A673 (cell line): ENCODE measurements at regions of chr15 and their contacts with region 1.

Region 1: DNA sequence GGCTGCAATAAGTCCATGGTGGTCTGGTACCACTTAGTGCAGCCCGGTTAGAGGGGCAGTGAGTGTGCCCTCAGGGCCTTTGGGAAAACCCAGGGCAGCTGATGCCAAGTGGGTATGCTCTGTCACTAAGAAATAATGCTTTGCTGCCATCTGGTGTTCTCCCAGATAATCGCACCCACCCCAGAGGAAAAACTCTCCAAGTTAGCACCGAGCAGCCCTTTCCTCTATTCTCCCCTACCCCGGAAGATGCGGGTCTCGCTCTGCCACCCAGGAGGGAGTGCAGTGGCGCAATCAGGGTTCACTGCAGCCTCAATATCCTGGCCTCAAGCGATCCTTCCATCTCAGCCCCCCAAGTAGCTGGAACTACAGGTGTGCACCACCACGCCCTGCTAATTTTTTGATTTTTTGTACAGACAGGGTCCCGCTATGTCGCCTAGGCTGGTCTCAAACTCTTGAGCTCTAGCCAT is 21.3 kb upstream of the DAPK2 start:
- DNase-seq: peak; percentile 86
- H3K4me3 ChIP-seq: no peak overlapping the region
- H3K27ac ChIP-seq: no peak overlapping the region
- H3K4me1 ChIP-seq: no peaks in the 10 kb centered on the region
- H3K27me3 ChIP-seq: no peaks in the 10 kb centered on the region
- CTCF ChIP-seq: peak; percentile 76

Region 2: GRCh38 chr15:63402498-63403253 is 664.9 kb before region 1 on chr15:
- CTCF ChIA-PET with region 1: no interaction called
- POLR2A ChIA-PET with region 1: no interaction called
- intact Hi-C with region 1: loop called (anchors 5 kb)
- DNase-seq: peak; percentile 67
- H3K4me3 ChIP-seq: no peak overlapping the region
- H3K27ac ChIP-seq: no peak overlapping the region
- H3K4me1 ChIP-seq: peaks cover 25% of the 10 kb centered on the region
- H3K27me3 ChIP-seq: no peaks in the 10 kb centered on the region
- CTCF ChIP-seq: peak; percentile 68

Region 3: GRCh38 chr15:63610200-63610841 is 457.3 kb before region 1 on chr15:
- CTCF ChIA-PET with region 1: interaction called, 17 read pairs
- POLR2A ChIA-PET with region 1: no interaction called
- intact Hi-C with region 1: loop called (anchors 1 kb)
- DNase-seq: peak; percentile 98
- H3K4me3 ChIP-seq: no peak overlapping the region
- H3K27ac ChIP-seq: peak overlapping the region; percentile 91
- H3K4me1 ChIP-seq: peaks cover 26% of the 10 kb centered on the region
- H3K27me3 ChIP-seq: no peaks in the 10 kb centered on the region
- CTCF ChIP-seq: peak; percentile 90

Region 4: DNA sequence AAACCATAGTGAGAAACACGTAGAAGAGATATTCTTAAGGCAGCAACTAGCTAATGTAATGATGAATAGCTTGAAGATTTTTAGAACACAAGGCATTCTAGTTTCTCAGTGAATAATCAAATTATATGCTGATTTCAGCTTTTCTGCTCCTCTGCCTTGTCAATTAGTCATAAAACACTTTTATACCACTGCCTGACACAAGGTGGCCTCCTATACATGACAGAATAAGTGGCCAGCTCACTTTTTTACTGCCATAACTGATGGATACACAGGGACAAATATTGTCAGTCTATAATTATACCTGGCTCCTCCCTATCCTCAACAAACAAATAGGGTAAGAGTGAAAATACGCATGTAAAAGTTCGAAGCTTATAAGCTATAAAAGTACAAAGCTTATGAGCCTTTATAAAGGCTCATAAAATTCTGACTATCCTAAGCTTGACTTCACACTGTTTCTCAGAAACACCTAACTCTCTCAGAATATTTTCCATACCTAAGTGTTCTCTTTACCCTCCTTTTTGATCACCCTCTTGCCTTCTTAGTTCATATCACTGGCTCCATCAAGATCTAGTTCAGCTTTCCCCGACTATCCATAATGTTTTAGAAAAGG is 315.4 kb before region 1 on chr15:
- CTCF ChIA-PET with region 1: interaction called, 30 read pairs
- POLR2A ChIA-PET with region 1: no interaction called
- intact Hi-C with region 1: loop called (anchors 1 kb)
- DNase-seq: peak; percentile 76
- H3K4me3 ChIP-seq: no peak overlapping the region
- H3K27ac ChIP-seq: no peak overlapping the region
- H3K4me1 ChIP-seq: no peaks in the 10 kb centered on the region
- H3K27me3 ChIP-seq: no peaks in the 10 kb centered on the region
- CTCF ChIP-seq: peak; percentile 79

Region 5: DNA sequence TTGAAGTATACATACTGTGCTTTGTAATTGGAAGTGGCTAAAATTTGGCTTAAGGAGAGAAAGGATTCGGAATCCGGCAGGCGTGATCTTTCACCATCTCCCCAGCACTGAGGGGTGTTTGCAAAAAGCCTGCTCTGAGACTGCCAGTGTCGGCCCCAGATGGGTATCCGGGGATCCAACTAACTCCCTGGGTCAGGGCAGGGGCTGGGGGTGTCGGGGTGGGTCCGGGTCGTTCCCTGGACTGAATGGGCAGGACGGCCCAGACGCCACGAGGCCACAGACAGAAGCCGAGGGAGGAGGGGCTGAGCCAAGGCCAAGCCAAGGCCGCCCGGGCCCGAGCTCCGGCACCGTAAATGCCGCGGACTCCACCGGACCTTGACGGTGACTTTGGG is 94.9 kb after region 1 on chr15:
- CTCF ChIA-PET with region 1: no interaction called
- POLR2A ChIA-PET with region 1: no interaction called
- intact Hi-C with region 1: no loop called
- DNase-seq: no peak
- H3K4me3 ChIP-seq: peak overlapping the region; percentile 77
- H3K27ac ChIP-seq: peak overlapping the region; percentile 79
- H3K4me1 ChIP-seq: peaks cover 10% of the 10 kb centered on the region
- H3K27me3 ChIP-seq: no peaks in the 10 kb centered on the region
- CTCF ChIP-seq: no peak